CD8-positive, alpha-beta memory T cell (primary cell): ENCODE measurements at regions of chr17 and their contacts with region 1.

Region 1: GRCh38 chr17:40531051-40531991 is 29.9 kb upstream of the TNS4 start:
- DNase-seq: peak; percentile 27 to 83 (median 60)
- H3K4me3 ChIP-seq: no peak overlapping the region
- H3K4me3 Mint-ChIP-seq: peak overlapping the region; percentile 19 to 78 (median 57)
- H3K27ac ChIP-seq: no peak overlapping the region
- H3K27ac Mint-ChIP-seq: peak overlapping the region; percentile 65 to 99 (median 94)
- H3K4me1 ChIP-seq: peaks cover 79% of the 10 kb centered on the region
- H3K4me1 Mint-ChIP-seq: peaks cover 68 to 85% (median 80%) of the 10 kb centered on the region in 3 donors
- H3K27me3 ChIP-seq: no peaks in the 10 kb centered on the region
- H3K27me3 Mint-ChIP-seq: peaks cover 0 to 3% of the 10 kb centered on the region in 2 donors

Region 2: DNA sequence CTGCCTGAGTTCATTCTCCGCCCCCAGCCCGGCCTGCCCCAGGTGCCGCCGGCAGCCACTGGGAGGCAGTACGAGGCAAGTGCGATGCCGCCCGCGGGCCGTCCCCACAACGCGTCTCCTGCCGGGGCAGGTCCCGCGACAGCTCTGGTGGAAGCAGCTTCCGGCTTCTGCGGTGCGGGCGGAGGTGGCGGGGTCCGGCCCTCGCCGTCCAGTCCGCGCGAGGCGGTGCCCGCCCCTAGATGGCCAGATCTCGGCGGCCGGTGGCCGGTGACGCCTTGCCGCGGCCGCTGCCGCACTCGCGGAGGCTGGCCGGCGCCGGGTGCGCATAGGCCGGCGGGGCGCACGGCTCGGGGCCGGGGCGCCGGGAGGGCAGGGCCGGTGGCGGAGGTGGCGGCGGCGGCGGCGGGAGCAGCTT is 168.6 kb before region 1 on chr17:
- CTCF ChIA-PET with region 1: interaction called, 61 read pairs
- POLR2A ChIA-PET with region 1: interaction called, 7 read pairs
- DNase-seq: peak; percentile 52 to 79 (median 65)
- H3K4me3 ChIP-seq: no peak overlapping the region
- H3K4me3 Mint-ChIP-seq: peak overlapping the region; percentile 33 to 81 (median 59)
- H3K27ac ChIP-seq: no peak overlapping the region
- H3K27ac Mint-ChIP-seq: no peak overlapping the region
- H3K4me1 ChIP-seq: peaks cover 11% of the 10 kb centered on the region
- H3K4me1 Mint-ChIP-seq: peaks cover 9 to 22% (median 9%) of the 10 kb centered on the region in 3 donors
- H3K27me3 ChIP-seq: no peaks in the 10 kb centered on the region
- H3K27me3 Mint-ChIP-seq: peaks cover 7 to 17% of the 10 kb centered on the region in 2 donors

Region 3: GRCh38 chr17:40417609-40418427 is 113.5 kb before region 1 on chr17 and contains the start of gene TOP2A:
- CTCF ChIA-PET with region 1: interaction called, 30 read pairs
- POLR2A ChIA-PET with region 1: interaction called, 12 read pairs
- DNase-seq: peak; percentile 84 to 98 (median 97)
- H3K4me3 ChIP-seq: peak within 1 kb of the TSS; percentile 98
- H3K4me3 Mint-ChIP-seq: peak within 1 kb of the TSS; percentile 86 to 96 (median 94)
- H3K27ac ChIP-seq: peak within 1 kb of the TSS; percentile 81
- H3K27ac Mint-ChIP-seq: peak within 1 kb of the TSS; percentile 59 to 93 (median 84)
- H3K4me1 ChIP-seq: peaks cover 10% of the 10 kb centered on the region
- H3K4me1 Mint-ChIP-seq: peaks cover 17 to 29% (median 23%) of the 10 kb centered on the region in 3 donors
- H3K27me3 ChIP-seq: no peaks in the 10 kb centered on the region
- H3K27me3 Mint-ChIP-seq: peaks cover 4 to 5% of the 10 kb centered on the region in 2 donors
- total RNA-seq, gene TOP2A: 138 to 143 TPM

Region 4: GRCh38 chr17:40443583-40444327 is 87.6 kb before region 1 on chr17:
- CTCF ChIA-PET with region 1: interaction called, 48 read pairs
- POLR2A ChIA-PET with region 1: interaction called, 6 read pairs
- DNase-seq: peak; percentile 49 to 74 (median 54)
- H3K4me3 ChIP-seq: peak overlapping the region; percentile 64
- H3K4me3 Mint-ChIP-seq: peak overlapping the region; percentile 82 to 95 (median 85)
- H3K27ac ChIP-seq: peak overlapping the region; percentile 47
- H3K27ac Mint-ChIP-seq: peak overlapping the region; percentile 84 to 98 (median 92)
- H3K4me1 ChIP-seq: peaks cover 40% of the 10 kb centered on the region
- H3K4me1 Mint-ChIP-seq: peaks cover 36 to 44% (median 38%) of the 10 kb centered on the region in 3 donors
- H3K27me3 ChIP-seq: no peaks in the 10 kb centered on the region
- H3K27me3 Mint-ChIP-seq: peaks cover 0 to 11% of the 10 kb centered on the region in 2 donors

Region 5: DNA sequence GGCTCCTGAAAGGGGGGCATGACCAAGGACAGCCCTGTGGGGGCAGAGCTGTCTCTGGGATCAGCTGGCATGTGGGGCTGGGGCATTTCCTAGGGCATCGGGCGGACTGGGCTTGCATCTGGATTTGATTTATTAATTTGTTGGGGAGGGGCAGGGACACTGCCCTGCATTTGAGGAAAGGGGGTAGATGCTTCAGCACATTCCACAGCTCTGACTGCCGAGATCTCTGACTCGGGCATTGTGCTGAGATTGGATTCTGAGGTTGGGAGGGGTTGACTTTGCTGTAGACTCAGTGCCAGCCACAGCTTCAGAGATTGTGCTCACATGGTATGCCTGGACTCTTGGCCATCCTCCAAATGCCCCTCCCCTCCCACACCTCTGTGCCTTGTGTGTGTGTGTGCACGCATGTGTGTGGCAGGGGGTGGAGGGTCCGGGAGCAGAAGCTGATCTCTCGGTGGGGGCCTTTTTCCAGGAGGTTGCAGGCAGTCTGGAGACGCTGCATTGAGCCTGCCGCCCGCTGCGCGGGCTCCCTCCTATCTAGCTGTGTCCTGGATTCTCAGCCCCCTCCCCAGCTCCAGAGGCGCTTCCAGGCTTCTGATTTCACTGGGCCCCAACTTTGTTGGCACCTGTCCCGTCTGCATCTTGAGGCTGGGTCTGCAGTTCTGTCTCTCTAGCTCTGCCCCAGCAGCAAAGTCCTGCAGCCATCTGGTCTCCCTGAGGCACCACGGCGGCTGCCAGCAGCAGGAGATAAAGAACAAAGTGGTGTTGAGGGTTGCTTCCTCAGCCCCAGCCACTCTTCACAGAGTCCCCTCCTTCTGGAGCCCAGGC is 73.1 kb before region 1 on chr17:
- CTCF ChIA-PET with region 1: no interaction called
- POLR2A ChIA-PET with region 1: no interaction called
- DNase-seq: no peak
- H3K4me3 ChIP-seq: no peak overlapping the region
- H3K4me3 Mint-ChIP-seq: peak overlapping the region in 1 of 7 donors; percentile 32
- H3K27ac ChIP-seq: no peak overlapping the region
- H3K27ac Mint-ChIP-seq: peak overlapping the region in 2 of 8 donors; percentile 57 to 66
- H3K4me1 ChIP-seq: no peaks in the 10 kb centered on the region
- H3K4me1 Mint-ChIP-seq: peaks cover 0 to 2% (median 0%) of the 10 kb centered on the region in 3 donors
- H3K27me3 ChIP-seq: no peaks in the 10 kb centered on the region
- H3K27me3 Mint-ChIP-seq: peaks cover 0 to 4% of the 10 kb centered on the region in 2 donors

Region 6: DNA sequence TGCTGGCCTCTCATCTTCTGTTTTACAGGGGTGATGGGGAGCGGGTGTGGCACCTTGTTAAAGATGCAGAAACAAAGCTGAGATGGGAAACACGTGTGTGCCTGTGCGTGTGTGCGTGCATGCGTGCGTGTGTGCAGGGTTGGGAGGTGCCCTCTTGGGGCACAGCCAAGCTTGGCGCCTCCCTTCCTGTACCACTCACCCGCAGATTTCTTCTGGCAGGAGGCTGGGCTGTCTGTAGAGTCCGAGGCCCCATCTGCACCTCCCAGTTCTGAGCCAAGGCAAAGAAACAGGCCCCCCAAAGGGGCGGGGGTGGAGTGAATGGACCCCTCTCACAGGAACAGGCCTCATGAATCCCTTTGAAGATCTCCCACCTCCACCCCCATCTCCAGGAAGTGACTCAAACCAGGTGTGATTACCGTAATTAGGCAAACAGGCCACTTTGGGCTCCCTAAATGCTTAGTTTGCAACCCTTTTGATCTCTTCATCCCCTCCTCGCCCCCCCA is 50.8 kb before region 1 on chr17:
- CTCF ChIA-PET with region 1: interaction called, 31 read pairs
- POLR2A ChIA-PET with region 1: interaction called, 23 read pairs
- DNase-seq: peak; percentile 76 to 96 (median 91)
- H3K4me3 ChIP-seq: no peak overlapping the region
- H3K4me3 Mint-ChIP-seq: peak overlapping the region; percentile 45 to 85 (median 62)
- H3K27ac ChIP-seq: peak overlapping the region; percentile 67
- H3K27ac Mint-ChIP-seq: peak overlapping the region; percentile 89 to 100 (median 99)
- H3K4me1 ChIP-seq: peaks cover 61% of the 10 kb centered on the region
- H3K4me1 Mint-ChIP-seq: peaks cover 64 to 86% (median 82%) of the 10 kb centered on the region in 3 donors
- H3K27me3 ChIP-seq: no peaks in the 10 kb centered on the region
- H3K27me3 Mint-ChIP-seq: peaks cover 0 to 1% of the 10 kb centered on the region in 2 donors

Region 7: GRCh38 chr17:40516581-40517285 is 14.6 kb before region 1 on chr17:
- CTCF ChIA-PET with region 1: interaction called, 23 read pairs
- POLR2A ChIA-PET with region 1: interaction called, 16 read pairs
- DNase-seq: peak; percentile 61 to 87 (median 83)
- H3K4me3 ChIP-seq: peak overlapping the region; percentile 40
- H3K4me3 Mint-ChIP-seq: peak overlapping the region; percentile 79 to 92 (median 89)
- H3K27ac ChIP-seq: peak overlapping the region; percentile 49
- H3K27ac Mint-ChIP-seq: peak overlapping the region; percentile 85 to 100 (median 95)
- H3K4me1 ChIP-seq: peaks cover 67% of the 10 kb centered on the region
- H3K4me1 Mint-ChIP-seq: peaks cover 64 to 77% (median 75%) of the 10 kb centered on the region in 3 donors
- H3K27me3 ChIP-seq: no peaks in the 10 kb centered on the region
- H3K27me3 Mint-ChIP-seq: peaks cover 0 to 5% of the 10 kb centered on the region in 2 donors

Region 8: GRCh38 chr17:40637931-40638330 is 106.6 kb after region 1 on chr17:
- CTCF ChIA-PET with region 1: no interaction called
- POLR2A ChIA-PET with region 1: no interaction called
- DNase-seq: no peak
- H3K4me3 ChIP-seq: no peak overlapping the region
- H3K4me3 Mint-ChIP-seq: peak overlapping the region in 1 of 7 donors; percentile 12
- H3K27ac ChIP-seq: no peak overlapping the region
- H3K27ac Mint-ChIP-seq: peak overlapping the region in 7 of 8 donors; percentile 2 to 86 (median 69)
- H3K4me1 ChIP-seq: peaks cover 5% of the 10 kb centered on the region
- H3K4me1 Mint-ChIP-seq: peaks cover 36 to 49% (median 46%) of the 10 kb centered on the region in 3 donors
- H3K27me3 ChIP-seq: no peaks in the 10 kb centered on the region
- H3K27me3 Mint-ChIP-seq: no peaks in the 10 kb centered on the region

Region 9: GRCh38 chr17:40675905-40676304 is 144.6 kb after region 1 on chr17:
- CTCF ChIA-PET with region 1: no interaction called
- POLR2A ChIA-PET with region 1: no interaction called
- DNase-seq: no peak
- H3K4me3 ChIP-seq: no peak overlapping the region
- H3K4me3 Mint-ChIP-seq: no peak overlapping the region
- H3K27ac ChIP-seq: no peak overlapping the region
- H3K27ac Mint-ChIP-seq: no peak overlapping the region
- H3K4me1 ChIP-seq: no peaks in the 10 kb centered on the region
- H3K4me1 Mint-ChIP-seq: peaks cover 0 to 1% (median 0%) of the 10 kb centered on the region in 3 donors
- H3K27me3 ChIP-seq: no peaks in the 10 kb centered on the region
- H3K27me3 Mint-ChIP-seq: peaks cover 30 to 48% of the 10 kb centered on the region in 2 donors